ENCODE measurements at regions of chr9 and their contacts with region 1.

Region 1: DNA sequence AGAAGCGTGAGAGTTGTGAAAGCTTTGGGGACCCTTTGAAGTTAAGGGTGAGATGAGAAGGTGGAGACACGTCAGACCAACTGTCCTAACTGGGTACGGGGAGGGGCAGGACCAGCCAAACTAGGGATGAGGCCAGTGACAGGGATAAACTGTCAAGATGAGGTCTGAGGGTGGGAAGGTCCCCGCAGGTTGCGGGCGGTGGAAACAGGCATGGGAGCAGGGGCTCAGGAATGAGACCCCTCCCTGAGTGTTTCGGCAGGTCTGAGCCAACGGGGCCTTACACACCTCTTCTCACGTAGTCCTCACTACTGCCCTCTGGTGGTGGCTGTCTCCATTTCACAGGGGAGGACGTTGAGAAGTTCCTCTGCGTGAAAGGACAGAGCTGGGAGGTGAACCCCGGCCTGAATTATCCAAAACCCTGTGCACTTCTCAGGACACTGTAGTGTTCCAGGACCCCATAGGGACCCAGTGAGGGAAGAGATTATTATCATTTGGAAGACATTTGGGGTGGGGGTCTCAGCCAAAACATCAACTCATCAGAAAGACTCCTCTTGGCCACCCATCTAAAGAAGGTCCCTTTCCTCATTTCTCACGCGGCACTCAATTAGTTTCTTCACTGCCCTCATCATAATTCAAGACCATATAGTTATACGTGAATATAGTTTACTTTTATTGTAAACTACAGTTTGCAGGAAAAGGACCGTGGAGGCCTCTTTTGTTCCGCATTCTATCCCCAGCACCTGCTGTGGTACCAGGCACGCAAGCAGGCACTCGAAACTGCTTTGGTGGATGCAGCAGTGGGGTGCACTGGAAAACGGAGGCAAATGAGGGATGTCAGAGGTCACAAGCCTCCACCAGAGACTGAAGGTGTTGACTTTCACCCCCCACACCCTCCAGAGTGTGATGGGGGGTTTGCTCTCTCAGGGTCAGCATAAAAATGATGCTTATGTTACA is 21.7 kb upstream of the NANS start:
- DNase-seq: peak; percentile 73
- ATAC-seq: peak; percentile 89
- H3K4me3 Mint-ChIP-seq: peak overlapping the region; percentile 1
- H3K27ac Mint-ChIP-seq: peak overlapping the region; percentile 36
- H3K4me1 Mint-ChIP-seq: peaks cover 47% of the 10 kb centered on the region
- H3K27me3 Mint-ChIP-seq: no peaks in the 10 kb centered on the region
- CTCF ChIP-seq: no peak

Region 2: DNA sequence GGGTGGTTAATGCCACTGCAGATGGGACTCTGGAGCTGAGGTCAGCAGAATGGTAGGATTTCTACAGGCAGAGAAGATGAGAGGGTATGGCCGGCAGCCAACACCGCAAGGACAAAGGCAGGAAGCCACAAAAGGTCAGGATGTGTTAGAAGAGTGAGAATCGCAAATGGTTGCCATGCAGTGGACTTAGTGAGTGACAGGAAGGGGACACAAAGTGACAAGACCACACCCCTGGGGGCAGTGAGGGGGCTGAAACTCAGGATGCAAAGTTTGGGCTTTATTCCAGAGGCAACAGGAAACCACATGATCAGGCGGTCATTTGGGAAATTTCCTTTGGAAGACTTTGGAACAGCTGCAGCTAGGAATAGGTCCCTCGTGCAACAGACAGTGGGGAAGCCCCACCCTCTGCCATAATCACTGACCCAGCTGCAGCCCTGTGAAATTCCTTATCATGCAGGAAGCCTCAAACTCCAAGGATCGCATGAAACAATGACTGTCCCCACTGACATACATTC is 741.6 kb before region 1 on chr9:
- CTCF ChIA-PET with region 1: no interaction called
- POLR2A ChIA-PET with region 1: no interaction called
- intact Hi-C with region 1: no loop called
- DNase-seq: no peak
- ATAC-seq: no peak
- H3K4me3 Mint-ChIP-seq: no peak overlapping the region
- H3K27ac Mint-ChIP-seq: no peak overlapping the region
- H3K4me1 Mint-ChIP-seq: no peaks in the 10 kb centered on the region
- H3K27me3 Mint-ChIP-seq: no peaks in the 10 kb centered on the region
- CTCF ChIP-seq: no peak

Region 3: DNA sequence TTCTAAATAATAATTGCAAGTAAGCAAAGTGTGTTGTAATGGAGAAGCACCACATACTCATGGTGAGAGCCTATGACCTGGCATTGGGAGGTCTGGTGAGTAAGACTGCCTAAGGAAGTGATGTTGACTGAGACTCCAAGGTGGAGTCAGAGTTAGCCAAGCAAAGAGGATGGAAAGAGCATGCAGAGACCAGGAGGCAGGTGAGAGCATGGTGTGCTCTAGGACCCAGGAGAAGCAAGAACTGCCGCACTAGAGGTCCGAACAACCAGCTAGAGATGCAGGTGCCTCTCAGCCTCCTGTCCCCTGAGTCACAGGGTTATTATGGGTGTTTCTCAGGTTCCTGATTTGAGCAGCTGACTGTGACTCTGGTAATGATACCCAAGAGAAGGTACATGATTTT is 24.4 kb before region 1 on chr9:
- CTCF ChIA-PET with region 1: interaction called, 5 read pairs
- POLR2A ChIA-PET with region 1: no interaction called
- intact Hi-C with region 1: loop called (anchors 2 kb)
- DNase-seq: no peak
- ATAC-seq: peak; percentile 96
- H3K4me3 Mint-ChIP-seq: no peak overlapping the region
- H3K27ac Mint-ChIP-seq: peak overlapping the region; percentile 24
- H3K4me1 Mint-ChIP-seq: peaks cover 21% of the 10 kb centered on the region
- H3K27me3 Mint-ChIP-seq: no peaks in the 10 kb centered on the region
- CTCF ChIP-seq: no peak

Region 4: DNA sequence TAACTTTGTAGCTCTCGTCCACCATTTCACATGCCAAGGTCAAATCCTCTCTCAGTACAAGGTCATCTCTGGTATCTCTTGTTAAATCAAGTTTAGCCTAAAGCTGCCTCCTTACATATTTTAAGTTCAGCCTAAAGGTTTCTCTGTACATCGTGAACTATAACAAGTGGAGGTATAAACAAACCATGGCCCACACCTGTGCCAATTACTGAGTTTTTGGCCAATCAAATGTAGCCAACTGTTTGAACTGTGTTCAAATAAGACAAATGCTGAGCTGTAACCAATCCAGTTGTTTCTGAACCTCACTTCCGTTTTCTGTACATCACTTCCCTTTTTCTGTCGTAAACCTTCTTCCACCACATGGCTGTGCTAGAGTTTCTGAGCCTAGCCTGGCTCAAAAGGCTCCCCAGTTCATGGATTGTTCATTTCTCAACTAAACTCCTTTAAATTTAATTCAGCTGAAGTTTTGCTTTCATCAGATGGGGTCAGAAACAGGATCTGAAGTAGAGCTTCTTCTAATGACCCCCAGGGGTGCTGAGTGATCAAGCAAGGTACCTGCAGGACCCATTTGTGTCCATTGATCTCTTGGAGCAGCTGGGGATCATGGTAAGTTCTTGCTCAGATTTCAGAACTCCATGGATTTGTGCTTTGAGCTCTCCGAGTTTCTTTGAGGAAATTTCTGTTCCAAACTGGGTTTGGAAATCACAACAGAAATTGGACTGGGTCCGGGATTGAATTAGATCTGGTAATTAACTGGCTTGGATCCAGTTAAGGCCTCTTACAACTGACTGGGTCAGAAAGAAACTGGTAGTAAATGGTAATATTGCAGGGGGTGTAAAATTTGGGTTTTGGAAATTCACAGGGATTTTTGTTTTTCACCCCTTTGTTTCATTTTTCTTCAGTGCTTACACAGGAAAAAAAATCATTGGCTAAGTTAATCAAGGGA is 10.6 kb after region 1 on chr9:
- CTCF ChIA-PET with region 1: interaction called, 7 read pairs
- POLR2A ChIA-PET with region 1: interaction called, 3 read pairs
- intact Hi-C with region 1: loop called (anchors 1 kb)
- DNase-seq: no peak
- ATAC-seq: peak; percentile 87
- H3K4me3 Mint-ChIP-seq: peak overlapping the region; percentile 83
- H3K27ac Mint-ChIP-seq: peak overlapping the region; percentile 84
- H3K4me1 Mint-ChIP-seq: peaks cover 53% of the 10 kb centered on the region
- H3K27me3 Mint-ChIP-seq: peaks cover under 1% of the 10 kb centered on the region
- CTCF ChIP-seq: no peak

Region 5: DNA sequence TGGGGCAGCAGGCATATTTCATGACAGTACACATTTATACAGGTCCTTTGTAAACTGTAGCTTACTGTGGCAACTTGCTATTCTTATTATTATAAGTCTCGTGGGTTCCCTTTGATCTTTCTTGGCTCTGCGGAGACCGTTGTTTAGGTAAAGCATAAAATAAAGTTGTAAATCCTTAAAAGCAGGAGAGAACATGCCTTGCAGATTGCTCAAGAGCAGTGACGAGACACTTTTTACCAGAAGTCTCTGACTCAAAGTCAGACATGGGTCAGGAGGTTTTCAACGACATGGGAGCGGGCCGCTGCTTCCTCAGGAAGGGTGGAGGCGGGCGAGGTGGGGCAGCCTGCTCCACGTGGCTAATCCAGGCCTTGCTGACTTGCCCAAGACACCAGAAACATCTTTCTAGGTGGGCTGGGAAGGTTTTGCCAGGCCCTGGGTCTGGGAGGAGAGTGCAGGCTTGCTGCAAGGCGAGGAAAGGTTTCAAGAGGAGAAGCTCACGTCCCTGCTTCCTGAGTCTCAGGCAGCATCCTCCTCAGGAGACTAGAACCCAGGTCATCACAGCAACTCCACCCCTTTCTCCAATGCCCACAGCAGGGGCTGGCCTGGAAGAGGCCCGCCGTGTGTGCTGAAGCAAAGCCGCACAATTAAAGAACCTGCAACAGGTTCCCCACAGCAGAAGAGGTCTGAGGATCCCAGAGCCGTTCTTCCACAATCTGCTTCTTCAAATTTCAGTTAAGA is 214.0 kb after region 1 on chr9:
- CTCF ChIA-PET with region 1: no interaction called
- POLR2A ChIA-PET with region 1: no interaction called
- intact Hi-C with region 1: no loop called
- DNase-seq: no peak
- ATAC-seq: no peak
- H3K4me3 Mint-ChIP-seq: no peak overlapping the region
- H3K27ac Mint-ChIP-seq: no peak overlapping the region
- H3K4me1 Mint-ChIP-seq: peaks cover 12% of the 10 kb centered on the region
- H3K27me3 Mint-ChIP-seq: no peaks in the 10 kb centered on the region
- CTCF ChIP-seq: no peak

Region 6: DNA sequence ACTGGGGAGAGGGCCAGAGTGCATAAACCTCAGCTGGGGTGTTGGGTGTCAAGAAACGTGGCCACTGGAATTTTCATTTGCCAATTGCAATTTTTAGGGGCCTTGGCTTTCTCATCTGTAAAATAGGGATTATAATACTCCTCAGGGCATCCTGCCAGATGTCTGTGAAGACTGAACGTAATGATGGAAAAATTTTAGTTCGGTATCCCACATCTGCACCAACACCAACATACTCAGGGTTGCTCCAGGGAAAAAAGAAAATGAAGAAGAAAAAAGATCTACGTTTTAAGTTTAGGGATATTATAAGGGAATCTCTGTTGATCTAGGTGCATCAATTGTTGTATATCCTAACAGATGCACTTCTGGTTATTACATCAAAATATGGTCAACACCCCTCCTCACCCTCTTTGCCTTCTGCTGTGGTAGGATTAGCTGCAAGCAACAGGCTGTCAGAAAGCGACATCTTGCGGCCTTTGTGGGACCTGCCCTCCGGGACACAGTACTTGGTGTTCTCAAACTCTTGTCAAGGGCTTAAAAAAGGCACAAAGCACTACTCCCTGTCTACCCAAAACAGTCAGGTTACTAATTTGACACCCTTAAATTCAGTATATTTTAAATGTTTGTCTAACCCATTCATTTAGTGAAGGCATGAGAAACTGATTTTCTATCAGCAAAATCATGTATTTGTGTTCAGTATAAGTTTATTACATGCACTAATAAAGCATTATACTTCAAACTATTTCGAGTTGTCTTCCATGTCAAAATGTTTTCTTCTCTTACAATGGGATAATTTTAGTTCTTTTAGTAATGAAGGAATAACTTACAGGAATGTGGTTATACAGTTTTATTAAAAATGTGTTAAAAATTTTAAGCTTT is 228.8 kb after region 1 on chr9:
- CTCF ChIA-PET with region 1: no interaction called
- POLR2A ChIA-PET with region 1: no interaction called
- intact Hi-C with region 1: loop called (anchors 1 kb)
- DNase-seq: peak; percentile 58
- ATAC-seq: peak; percentile 100
- H3K4me3 Mint-ChIP-seq: no peak overlapping the region
- H3K27ac Mint-ChIP-seq: no peak overlapping the region
- H3K4me1 Mint-ChIP-seq: no peaks in the 10 kb centered on the region
- H3K27me3 Mint-ChIP-seq: peaks cover 5% of the 10 kb centered on the region
- CTCF ChIP-seq: peak; percentile 86

Measured in activated B cell treated with CpG ODN at 0.5 μM for 24 hours (primary cell).